ENCODE measurements at regions of chr14 and their contacts with region 1.

Region 1: DNA sequence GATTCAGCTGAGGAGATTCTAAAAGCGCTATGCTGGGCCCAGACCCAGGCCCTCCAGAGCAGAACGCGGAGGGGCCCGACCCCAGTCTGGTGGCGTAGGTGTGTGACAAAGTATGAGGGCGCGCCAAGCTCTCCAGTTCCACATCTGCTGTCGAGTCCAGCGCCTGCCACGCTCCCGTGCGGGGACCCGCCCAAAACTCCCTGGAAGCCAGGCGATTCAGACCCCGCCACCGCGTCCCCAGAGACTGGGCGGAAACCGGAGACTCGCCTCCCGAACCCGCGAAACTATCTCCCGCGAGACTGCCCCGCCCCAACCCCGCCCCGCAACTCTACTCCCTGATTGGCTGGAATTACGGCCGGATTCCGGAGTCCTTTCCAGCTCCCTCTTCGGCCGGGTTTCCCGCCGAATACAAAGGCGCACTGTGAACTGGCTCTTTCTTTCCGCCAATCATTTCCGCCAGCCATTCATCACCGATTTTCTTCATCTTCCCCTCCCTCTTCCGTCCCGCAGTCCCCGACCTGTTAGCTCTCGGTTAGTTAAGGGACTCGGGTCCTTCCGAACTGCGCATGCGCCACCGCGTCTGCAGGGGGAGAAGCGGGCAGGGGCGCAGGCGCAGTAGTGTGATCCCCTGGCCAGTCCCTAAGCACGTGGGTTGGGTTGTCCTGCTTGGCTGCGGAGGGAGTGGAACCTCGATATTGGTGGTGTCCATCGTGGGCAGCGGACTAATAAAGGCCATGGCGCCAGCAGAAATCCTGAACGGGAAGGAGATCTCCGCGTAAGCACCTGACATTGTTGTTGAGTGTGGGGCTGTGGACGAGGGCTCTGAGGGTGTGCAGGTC is at the start of gene MTHFD1:
- H3K4me3 ChIP-seq: peak within 1 kb of the TSS; percentile 47
- H3K27ac ChIP-seq: peak within 1 kb of the TSS; percentile 94
- H3K4me1 ChIP-seq: 0 out of 2 replicates have a peak, but pooled peaks cover 2% of the 10 kb centered on the region
- CTCF ChIP-seq: no peak

Region 2: DNA sequence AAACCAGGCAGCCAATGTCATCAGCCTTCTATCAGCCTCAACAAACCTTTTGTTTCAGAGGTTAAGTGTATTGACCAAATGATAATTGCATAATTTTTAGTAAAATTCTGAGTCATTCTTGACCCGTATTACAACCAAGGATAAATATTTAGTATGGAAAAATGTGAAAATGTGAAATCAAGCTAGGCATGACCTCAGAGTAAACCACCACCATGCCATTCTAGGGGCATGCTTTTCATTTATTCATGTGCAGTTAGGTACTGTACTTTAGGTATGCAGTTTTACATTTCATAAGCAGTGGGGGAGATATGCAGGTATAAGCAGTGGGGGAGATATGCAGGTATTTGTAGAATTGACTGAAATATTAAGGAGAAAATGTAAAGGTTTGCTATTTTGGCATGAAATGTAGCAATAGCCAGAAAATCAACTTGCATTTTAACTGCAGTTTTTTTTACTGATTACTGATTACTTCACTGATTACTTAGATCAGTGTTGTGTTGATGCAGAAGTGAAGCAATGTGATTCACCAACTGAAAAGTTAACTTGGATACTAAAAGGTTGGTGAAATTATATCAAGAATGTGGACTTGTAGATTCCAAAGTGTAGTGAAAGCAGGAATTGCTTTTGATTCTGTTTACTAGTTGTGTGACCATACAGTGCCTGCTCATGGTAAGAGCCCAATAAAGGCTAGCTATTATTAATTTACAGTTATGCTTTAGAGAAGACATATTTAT is 277.9 kb before region 1 on chr14:
- CTCF ChIA-PET with region 1: no interaction called
- POLR2A ChIA-PET with region 1: no interaction called
- H3K4me3 ChIP-seq: no peak overlapping the region
- H3K27ac ChIP-seq: no peak overlapping the region
- H3K4me1 ChIP-seq: no peaks in the 10 kb centered on the region
- CTCF ChIP-seq: no peak

Region 3: GRCh38 chr14:64338616-64339316 is 49.1 kb before region 1 on chr14:
- CTCF ChIA-PET with region 1: interaction called, 8 read pairs
- POLR2A ChIA-PET with region 1: interaction called, 29 read pairs
- H3K4me3 ChIP-seq: peak overlapping the region; percentile 77
- H3K27ac ChIP-seq: peak overlapping the region; percentile 94
- H3K4me1 ChIP-seq: no peaks in the 10 kb centered on the region
- CTCF ChIP-seq: no peak

Region 4: DNA sequence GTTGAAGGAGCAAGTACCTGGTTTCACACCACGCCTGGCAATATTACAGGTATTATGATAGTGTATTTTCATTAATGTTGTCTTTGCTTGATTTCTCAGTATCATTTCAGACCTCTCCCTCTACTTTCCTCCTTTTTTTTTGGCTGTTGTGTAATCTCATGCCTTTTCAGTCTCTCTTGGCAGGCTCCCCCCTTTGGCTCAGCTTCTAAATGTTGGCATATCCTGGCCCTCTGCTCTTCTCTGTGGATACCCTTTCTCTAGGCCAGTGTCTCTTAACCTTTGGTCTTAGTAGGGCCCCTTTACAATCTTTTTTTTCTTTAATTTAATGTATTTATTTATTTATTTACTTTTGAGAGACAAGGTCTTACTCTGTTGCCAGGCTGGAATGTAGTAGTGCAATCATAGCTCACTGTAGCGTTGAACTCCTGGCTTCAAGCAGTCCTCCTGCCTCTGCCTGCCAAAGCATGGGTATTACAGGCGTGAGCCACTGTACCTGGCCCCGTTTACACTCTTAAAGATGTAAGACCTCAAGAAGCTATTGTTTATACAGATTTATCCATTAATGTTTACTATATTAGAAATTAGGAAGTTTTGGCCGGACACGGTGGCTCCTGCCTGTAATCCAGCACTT is 13.0 kb after region 1 on chr14:
- CTCF ChIA-PET with region 1: no interaction called
- POLR2A ChIA-PET with region 1: interaction called, 13 read pairs
- H3K4me3 ChIP-seq: no peak overlapping the region
- H3K27ac ChIP-seq: no peak overlapping the region; the same call in 1 of the 2 replicates
- H3K4me1 ChIP-seq: no peaks in the 10 kb centered on the region
- CTCF ChIP-seq: no peak